Lower leg skin (tissue), 4 donors: ENCODE measurements at regions of chr7 and their contacts with region 1.

Region 1: DNA sequence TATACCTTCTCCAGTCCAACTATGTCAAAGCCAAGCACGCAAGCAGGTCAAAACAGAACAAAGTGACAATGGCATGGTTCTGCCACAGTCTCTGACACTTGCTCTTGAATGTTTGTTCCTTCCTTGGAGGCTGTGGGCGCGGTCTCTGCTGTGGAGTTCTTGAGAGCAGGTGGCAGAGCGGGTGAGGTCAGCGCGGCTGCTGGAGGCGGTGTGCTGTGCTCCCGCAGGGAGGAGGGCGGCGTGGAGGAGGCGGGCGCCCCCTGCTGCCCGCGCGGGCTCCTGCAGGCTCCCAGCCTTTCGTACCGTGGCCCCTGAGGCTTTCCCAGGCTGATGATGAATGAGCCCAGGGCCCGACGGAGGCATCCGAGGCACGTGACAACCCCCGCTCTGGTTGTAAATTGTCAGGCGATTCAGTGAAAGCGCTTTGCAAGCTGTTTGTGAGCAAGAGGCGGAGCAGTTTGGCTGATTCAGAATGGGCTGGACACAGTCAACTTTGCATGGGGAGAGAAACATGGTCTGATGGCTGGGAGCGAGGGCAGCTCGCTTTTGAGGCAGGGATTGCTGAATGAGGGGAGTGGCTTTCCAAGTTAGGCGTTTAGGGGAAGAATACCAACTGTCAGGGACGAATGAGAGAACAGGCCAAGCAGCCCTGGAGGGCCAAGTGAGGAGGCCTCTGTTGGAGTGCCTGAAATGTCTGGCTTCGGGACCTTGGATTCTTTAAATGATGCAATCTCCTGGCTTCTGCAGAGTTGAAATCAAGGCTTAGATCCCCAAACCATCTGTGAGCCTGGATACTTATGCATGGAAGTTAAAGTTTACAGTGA is 46.6 kb downstream of the CDHR3 start:
- DNase-seq: peak; percentile 80 to 96
- H3K4me3 ChIP-seq: no peak overlapping the region
- CTCF ChIP-seq: peak in 1 of 3 donors; percentile 78
- POLR2A ChIP-seq: no peak

Region 2: DNA sequence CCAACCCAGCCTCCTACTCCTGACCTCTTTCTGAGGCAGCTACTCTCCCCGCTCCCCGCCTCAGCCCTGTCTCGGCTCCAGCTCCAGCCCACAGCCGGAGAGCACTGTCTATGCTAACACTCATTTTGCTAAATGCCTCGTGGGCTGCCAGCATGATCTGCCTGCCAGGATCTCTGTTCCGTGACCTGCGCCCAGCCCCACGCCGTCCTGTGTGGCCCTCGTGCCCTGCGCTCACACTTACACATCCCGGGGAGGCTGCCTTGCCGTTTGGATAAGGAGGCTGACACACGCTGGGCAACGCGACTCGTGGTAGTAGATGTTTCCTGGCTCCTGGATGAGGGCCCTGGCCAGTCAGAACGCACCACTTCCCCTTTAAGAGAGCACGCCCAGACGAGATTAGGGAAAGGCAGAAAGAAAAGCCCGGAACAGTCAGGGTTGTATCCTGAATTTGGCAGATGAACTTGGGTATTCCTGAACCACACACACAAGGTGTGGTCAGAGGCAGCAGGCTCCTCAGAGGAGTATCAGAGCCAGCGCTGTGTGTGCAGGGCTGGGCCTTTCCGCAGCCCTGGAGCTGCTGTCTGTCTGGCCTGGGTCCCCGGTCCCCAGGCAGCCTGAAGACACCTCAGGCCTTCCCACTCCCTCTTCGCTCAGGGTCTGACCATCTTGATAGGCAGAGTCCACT is 330.7 kb before region 1 on chr7:
- intact Hi-C with region 1: no loop called
- DNase-seq: peak; percentile 88 to 95
- H3K4me3 ChIP-seq: peak overlapping the region; percentile 20
- CTCF ChIP-seq: no peak
- POLR2A ChIP-seq: no peak

Region 3: DNA sequence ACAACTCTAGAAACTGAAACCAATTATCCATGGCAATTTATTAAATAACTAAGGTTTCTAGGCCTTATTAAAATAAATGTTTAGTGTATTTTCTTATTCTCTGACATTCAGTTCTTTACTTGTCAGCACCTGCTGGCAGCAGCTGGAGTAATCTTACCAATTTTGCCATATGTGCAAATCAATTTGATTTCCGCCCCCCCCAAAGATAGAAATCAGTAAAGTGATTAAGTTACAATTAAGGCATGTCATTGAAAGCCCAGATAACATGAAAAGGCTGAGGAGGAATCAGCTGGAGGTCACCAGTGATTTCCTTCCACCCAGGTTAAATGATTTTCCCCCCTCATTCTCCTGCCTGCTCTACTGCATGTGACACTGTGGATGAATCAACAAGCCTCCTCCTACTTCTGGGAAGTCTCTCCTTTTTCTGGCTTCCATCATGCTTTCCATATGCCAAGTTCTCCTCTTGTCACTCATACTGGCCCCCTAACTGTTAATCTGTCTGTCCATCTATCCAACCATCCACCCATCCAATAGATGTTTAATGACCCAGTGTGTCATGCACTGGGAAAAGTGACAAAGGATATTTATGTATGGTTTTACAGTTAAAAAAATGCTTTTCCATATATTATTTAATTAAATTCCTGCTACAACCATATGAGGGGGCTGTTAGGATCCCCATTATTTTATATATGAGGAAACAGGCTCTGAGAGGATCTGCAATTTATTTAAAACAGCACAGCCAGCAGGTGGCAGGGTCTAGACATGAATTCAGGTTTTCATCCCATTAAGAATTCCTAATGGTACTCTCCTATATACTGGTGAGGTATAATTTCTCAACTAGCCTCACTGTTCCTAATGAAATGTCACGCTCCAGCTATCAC is 249.7 kb before region 1 on chr7:
- intact Hi-C with region 1: loop called (anchors 10 kb)
- DNase-seq: peak in 1 of 2 donors; percentile 26
- H3K4me3 ChIP-seq: no peak overlapping the region
- CTCF ChIP-seq: peak in 1 of 3 donors; percentile 22
- POLR2A ChIP-seq: no peak

Region 4: GRCh38 chr7:105975770-105976422 is 33.7 kb before region 1 on chr7:
- intact Hi-C with region 1: no loop called
- DNase-seq: peak in 1 of 2 donors; percentile 29
- H3K4me3 ChIP-seq: no peak overlapping the region
- CTCF ChIP-seq: no peak
- POLR2A ChIP-seq: no peak